Caco-2 (cell line): ENCODE measurements at regions of chrX and their contacts with region 1.

Region 1: DNA sequence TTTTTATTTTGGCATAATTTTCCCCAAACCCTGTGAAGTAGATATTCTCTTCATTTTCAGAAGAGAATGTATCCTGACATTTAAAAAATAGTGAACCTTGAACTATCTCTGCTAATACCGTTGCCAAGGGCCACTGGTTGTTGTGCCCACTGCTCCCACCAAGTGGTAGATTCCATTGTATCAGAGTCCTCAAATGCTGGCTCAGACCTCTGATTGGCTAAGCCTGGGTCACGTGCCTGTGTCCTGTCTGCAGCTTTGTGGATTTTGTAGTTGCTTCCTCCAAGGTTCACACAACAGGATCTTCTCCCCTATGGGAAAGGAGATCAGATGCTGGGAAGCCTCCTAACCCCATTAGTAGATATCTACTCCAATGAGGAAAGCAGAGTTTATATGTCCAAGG is 104.8 kb upstream of the CASK start:
- DNase-seq: peak; percentile 68 to 76
- H3K4me3 ChIP-seq: no peak overlapping the region
- H3K4me3 Mint-ChIP-seq: peak overlapping the region; percentile 62
- H3K27ac Mint-ChIP-seq: peak overlapping the region; percentile 92
- H3K4me1 ChIP-seq: peaks cover 23% of the 10 kb centered on the region
- H3K4me1 Mint-ChIP-seq: peaks cover 12% of the 10 kb centered on the region
- H3K27me3 ChIP-seq: no peaks in the 10 kb centered on the region
- H3K27me3 Mint-ChIP-seq: no peaks in the 10 kb centered on the region
- CTCF ChIP-seq: no peak

Region 2: GRCh38 chrX:40821780-40822179 is 1206.3 kb before region 1 on chrX:
- CTCF ChIA-PET with region 1: no interaction called
- POLR2A ChIA-PET with region 1: no interaction called
- intact Hi-C with region 1: no loop called
- DNase-seq: no peak
- H3K4me3 ChIP-seq: no peak overlapping the region
- H3K4me3 Mint-ChIP-seq: no peak overlapping the region
- H3K27ac Mint-ChIP-seq: no peak overlapping the region
- H3K4me1 ChIP-seq: peaks cover 4% of the 10 kb centered on the region; the same call in 1 of the 2 replicates
- H3K4me1 Mint-ChIP-seq: no peaks in the 10 kb centered on the region
- H3K27me3 ChIP-seq: no peaks in the 10 kb centered on the region
- H3K27me3 Mint-ChIP-seq: no peaks in the 10 kb centered on the region
- CTCF ChIP-seq: no peak

Region 3: GRCh38 chrX:41796577-41796976 is 231.5 kb before region 1 on chrX:
- CTCF ChIA-PET with region 1: no interaction called
- POLR2A ChIA-PET with region 1: no interaction called
- intact Hi-C with region 1: loop called (anchors 5 kb)
- DNase-seq: no peak
- H3K4me3 ChIP-seq: no peak overlapping the region
- H3K4me3 Mint-ChIP-seq: no peak overlapping the region
- H3K27ac Mint-ChIP-seq: no peak overlapping the region
- H3K4me1 ChIP-seq: no peaks in the 10 kb centered on the region
- H3K4me1 Mint-ChIP-seq: peaks cover 12% of the 10 kb centered on the region
- H3K27me3 ChIP-seq: no peaks in the 10 kb centered on the region
- H3K27me3 Mint-ChIP-seq: no peaks in the 10 kb centered on the region
- CTCF ChIP-seq: no peak

Region 4: GRCh38 chrX:41963348-41963747 is 64.8 kb before region 1 on chrX:
- CTCF ChIA-PET with region 1: no interaction called
- POLR2A ChIA-PET with region 1: no interaction called
- intact Hi-C with region 1: loop called (anchors 2 kb)
- DNase-seq: no peak
- H3K4me3 ChIP-seq: no peak overlapping the region
- H3K4me3 Mint-ChIP-seq: no peak overlapping the region
- H3K27ac Mint-ChIP-seq: peak overlapping the region; percentile 23
- H3K4me1 ChIP-seq: peaks cover 36% of the 10 kb centered on the region
- H3K4me1 Mint-ChIP-seq: peaks cover 40% of the 10 kb centered on the region
- H3K27me3 ChIP-seq: no peaks in the 10 kb centered on the region
- H3K27me3 Mint-ChIP-seq: no peaks in the 10 kb centered on the region
- CTCF ChIP-seq: no peak

Region 5: GRCh38 chrX:42096265-42096920 is 68.3 kb after region 1 on chrX:
- CTCF ChIA-PET with region 1: no interaction called
- POLR2A ChIA-PET with region 1: no interaction called
- intact Hi-C with region 1: loop called (anchors 1 kb)
- DNase-seq: peak; percentile 82 to 92
- H3K4me3 ChIP-seq: no peak overlapping the region
- H3K4me3 Mint-ChIP-seq: peak overlapping the region; percentile 59
- H3K27ac Mint-ChIP-seq: peak overlapping the region; percentile 92
- H3K4me1 ChIP-seq: peaks cover 48% of the 10 kb centered on the region
- H3K4me1 Mint-ChIP-seq: peaks cover 31% of the 10 kb centered on the region
- H3K27me3 ChIP-seq: no peaks in the 10 kb centered on the region
- H3K27me3 Mint-ChIP-seq: no peaks in the 10 kb centered on the region
- CTCF ChIP-seq: no peak